Cardiac septum (tissue), 1 donor: ENCODE measurements at regions of chr1 and their contacts with region 1.

Region 1: DNA sequence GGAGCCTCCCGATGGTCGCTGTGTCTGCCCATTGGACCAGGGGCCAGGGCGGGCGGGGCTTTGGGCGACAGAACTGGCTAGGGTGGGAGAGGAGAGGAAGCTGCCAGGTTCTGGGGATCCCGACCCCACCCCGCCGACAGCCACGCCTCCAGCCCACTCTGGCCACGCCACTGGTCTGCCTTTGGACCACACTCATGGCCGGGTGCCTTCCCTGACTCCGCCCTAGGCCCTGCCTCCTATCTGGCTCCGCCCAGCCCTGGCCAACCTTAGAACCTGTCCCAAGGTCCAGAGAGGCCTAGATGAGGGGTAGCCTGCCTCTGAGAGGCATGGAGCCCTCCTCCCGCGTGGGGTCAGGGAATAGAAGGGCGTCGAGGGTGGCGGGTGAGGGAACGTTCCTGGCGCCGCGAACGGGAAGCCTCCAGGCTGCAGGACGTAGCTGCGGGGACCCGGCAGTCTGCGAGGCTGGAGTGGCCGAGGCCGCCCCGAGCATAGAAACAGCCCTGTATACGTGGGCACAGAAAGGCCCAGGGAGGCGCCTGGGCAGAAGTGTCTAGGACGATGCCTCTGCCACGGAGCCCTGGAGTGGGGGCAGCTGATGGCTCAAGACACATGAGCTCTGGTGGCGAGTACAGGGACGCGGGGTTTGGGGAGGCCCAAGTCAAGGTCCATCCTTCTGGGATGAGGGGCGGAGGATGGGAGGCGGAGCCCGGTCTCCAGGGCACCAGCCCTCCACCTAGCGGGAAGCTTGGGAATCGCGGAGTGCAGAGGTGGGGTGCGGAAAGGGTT is 11.5 kb upstream of the COL16A1 start:
- DNase-seq: peak; percentile 96

Region 2: GRCh38 chr1:31647106-31647505 is 68.2 kb before region 1 on chr1:
- intact Hi-C with region 1: loop called (anchors 1 kb)
- DNase-seq: no peak

Region 3: GRCh38 chr1:31669786-31670592 is 45.3 kb before region 1 on chr1:
- intact Hi-C with region 1: loop called (anchors 2 kb)
- DNase-seq: peak; percentile 80

Region 4: DNA sequence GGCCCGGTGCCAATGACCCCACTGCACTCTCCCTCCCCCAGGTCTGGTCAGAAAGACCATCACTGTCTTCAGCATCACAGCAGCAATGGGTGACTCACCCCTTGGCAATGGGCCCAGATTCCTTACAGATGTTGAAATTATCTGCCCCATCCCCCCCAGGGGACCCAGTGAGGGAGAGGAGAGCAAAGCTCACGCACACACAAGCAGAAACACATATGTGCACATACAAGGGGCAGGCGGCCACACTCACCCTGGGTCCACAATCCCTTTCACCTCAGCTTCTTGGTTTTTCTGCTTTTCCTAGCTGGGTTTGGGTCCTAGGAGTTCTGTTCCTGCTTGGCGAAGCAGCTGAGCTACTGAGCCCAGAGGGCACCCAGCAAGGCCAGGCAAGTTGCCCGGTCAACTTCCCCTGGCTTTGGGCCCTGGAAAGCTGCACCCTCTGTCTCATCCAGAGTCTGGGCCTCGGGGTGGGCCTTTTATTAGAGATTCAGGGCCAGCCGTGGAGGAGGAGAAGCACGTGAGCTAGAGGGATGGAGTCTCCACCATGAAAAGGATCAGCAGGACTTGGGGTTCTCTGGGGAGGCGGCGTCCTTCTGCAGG is 14.0 kb before region 1 on chr1:
- intact Hi-C with region 1: loop called (anchors 1 kb)
- DNase-seq: peak; percentile 89

Region 5: DNA sequence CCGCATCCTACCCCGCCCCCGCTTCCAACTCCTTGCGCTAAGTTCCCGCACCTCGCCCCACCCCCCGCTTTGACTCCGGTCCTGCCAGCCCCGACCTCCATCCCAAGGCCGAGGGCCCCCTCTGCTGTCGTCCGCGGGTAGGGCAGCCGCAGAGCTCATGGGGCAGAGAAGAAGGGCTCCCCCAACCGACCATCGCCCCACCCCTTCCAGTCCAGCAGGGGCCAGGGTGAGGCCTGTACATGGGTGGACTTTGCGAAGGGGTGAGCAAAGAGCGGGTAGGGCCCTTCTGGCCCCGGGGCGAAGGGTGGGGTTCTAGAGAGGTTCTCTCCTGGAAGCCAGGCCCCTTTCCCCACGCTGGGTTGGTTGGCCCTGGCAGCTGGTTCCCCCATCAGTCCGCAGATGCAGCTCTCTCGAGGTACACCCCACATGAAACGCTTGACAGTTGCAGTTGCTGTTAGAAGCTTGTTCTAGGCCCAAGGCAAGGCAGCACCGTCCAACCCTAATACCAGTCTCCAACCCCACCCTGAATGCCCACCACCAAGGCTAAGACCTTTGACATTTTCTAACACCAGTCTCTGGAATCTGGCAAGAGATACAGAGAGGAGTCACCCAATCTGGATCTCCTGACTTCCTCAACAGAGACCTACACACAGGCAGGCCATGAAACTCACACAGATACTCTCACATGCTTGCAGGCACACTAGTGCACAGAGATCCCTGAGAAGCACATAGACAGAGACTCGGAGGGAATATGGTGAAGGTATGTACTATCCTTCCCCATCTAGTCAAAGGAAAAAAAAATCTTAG is 74.2 kb after region 1 on chr1:
- intact Hi-C with region 1: loop called (anchors 5 kb)
- DNase-seq: peak; percentile 98

Region 6: DNA sequence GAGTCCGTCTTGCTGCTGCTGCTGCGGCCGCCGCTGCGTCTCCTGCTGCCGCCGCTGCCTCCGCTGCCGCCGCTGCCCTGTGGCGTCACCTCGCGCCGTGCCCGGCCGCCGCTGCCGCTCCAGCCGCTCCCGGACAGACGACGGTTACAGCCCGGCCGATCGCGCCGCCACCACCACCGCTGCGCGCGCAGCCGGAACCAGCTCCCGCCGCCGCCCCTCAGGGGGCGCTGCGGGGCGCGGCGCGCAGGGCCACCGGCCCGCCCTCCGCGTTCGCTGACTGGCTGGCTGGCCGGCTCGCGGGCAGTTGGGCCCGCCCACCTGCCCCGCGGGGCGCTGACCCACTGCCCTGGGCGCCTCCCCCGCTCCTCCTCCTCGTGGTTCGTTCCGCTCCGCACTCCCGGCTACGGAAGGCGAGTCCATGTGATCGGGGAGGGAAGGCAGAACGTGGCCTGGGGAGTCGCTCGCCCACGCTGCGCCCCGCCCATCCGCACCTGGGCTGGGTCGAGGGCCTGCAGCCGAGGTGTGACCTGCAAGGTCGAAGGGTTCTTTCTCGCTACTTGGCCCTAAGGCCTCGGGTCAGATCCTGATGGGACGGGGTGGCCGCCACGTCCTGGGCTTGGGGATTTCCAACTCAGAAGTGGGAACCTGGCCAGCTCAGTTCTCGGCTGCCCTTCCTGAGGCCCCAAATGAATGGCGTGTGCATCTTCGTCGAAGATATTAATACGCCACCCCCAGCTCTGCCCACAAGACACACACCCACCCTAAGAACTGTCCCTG is 223.1 kb after region 1 on chr1 and contains the start of gene PTP4A2:
- intact Hi-C with region 1: loop called (anchors 5 kb)
- DNase-seq: peak; percentile 98
- total RNA-seq, gene PTP4A2: 216 TPM